ENCODE measurements at regions of chr3 and their contacts with region 1.

Region 1: GRCh38 chr3:177050501-177051237 is 146.6 kb downstream of the TBL1XR1 start:
- DNase-seq: peak; percentile 21
- H3K4me3 Mint-ChIP-seq: no peak overlapping the region
- H3K27ac Mint-ChIP-seq: no peak overlapping the region
- H3K4me1 Mint-ChIP-seq: no peaks in the 10 kb centered on the region
- H3K27me3 Mint-ChIP-seq: no peaks in the 10 kb centered on the region
- CTCF ChIP-seq: peak; percentile 77

Region 2: GRCh38 chr3:177300039-177300833 is 249.6 kb after region 1 on chr3:
- CTCF ChIA-PET with region 1: interaction called, 9 read pairs
- intact Hi-C with region 1: loop called (anchors 5 kb)
- DNase-seq: peak; percentile 72
- H3K4me3 Mint-ChIP-seq: peak overlapping the region; percentile 50
- H3K27ac Mint-ChIP-seq: peak overlapping the region; percentile 86
- H3K4me1 Mint-ChIP-seq: peaks cover 39% of the 10 kb centered on the region
- H3K27me3 Mint-ChIP-seq: no peaks in the 10 kb centered on the region
- CTCF ChIP-seq: no peak

Region 3: DNA sequence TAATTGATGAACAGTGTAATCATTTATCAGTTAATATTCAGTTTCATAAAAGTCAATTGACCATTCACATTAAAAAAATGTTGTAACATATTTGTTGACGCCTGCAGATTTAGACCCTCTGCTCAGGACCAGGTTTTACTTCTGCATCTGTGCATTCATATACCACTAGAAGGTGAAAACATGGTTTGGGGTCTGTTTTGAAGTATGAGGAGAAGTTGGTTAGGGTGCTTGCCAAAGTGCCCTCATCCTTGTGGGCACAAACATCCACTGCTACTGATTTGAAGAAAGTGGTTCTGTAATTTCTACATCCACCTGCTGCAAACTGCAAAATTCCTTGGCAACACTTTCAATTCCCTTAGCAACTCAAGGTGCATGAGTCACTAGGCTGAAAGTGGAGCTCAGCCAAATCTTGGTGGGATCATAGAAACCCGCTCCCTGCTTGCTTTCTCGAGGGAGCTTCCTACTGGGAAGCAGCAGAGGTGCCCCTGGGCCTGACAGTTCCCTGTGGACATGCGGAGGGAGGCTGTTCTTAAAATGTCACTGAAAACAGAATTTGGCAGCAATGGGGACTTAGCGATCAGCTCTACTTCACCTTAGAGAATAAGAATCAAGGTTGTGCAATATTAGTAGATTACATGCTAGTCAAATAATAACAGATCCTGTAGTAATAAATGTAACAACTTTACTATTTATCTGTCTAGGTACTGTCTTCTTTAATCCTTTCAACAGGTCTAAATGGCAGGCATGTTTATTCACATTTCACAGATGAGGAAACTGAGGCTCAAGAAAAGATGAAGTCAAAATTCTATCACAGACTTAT is 447.6 kb after region 1 on chr3:
- CTCF ChIA-PET with region 1: no interaction called
- intact Hi-C with region 1: loop called (anchors 5 kb)
- DNase-seq: peak; percentile 79
- H3K4me3 Mint-ChIP-seq: peak overlapping the region; percentile 20
- H3K27ac Mint-ChIP-seq: peak overlapping the region; percentile 32
- H3K4me1 Mint-ChIP-seq: peaks cover 32% of the 10 kb centered on the region
- H3K27me3 Mint-ChIP-seq: no peaks in the 10 kb centered on the region
- CTCF ChIP-seq: no peak

Region 4: DNA sequence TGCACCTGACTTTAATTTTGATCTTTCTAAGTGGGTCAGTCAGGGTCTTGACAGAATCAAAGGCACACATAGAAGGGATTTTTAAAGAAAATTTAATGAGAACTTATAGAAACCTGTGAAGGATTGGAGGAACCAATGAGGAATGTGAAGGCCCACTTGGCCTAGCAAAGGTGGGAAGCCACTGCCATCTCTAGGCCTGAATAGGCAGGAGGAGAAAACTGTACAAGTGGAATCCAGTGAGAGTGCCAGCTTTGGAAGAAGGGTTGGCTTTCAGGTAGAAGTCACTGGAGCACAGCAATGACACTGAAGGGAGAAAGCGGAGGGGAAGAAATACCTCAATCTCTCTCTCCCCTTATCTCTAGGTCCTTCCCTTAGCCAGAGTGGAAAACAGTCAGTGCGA is 1104.9 kb after region 1 on chr3:
- CTCF ChIA-PET with region 1: no interaction called
- intact Hi-C with region 1: loop called (anchors 10 kb)
- DNase-seq: peak; percentile 16
- H3K4me3 Mint-ChIP-seq: no peak overlapping the region
- H3K27ac Mint-ChIP-seq: no peak overlapping the region
- H3K4me1 Mint-ChIP-seq: no peaks in the 10 kb centered on the region
- H3K27me3 Mint-ChIP-seq: no peaks in the 10 kb centered on the region
- CTCF ChIP-seq: no peak

Region 5: DNA sequence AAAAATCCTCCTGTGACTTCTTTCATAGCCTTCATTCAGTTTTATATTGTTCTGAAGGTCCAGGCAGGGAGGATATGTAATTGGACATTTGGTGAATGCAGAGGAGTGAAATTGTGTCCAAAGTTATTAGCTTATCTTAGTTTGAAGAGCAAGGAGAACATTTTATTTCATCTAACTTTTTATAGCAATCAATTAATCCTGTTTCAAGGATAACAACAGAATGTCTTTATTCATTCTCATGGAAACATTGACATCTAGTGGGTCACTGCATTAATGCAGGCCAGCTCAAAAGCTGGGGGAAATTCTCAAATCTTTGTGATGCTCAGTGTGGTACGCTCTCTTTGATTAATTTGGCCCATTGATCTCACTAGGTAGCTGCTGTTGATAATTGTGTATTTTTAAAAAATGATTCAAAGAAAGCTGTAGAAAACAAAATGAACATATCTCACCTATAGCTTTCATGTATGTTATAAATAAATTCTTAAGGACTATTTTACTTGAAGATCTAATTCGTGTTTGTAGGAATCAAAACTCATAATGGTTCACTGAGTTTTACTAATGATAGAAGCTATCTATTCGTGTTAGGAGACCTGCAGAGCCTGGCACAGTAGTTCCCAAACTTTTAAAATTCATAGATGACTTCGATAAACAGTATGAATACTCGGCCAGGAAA is 1334.7 kb after region 1 on chr3:
- CTCF ChIA-PET with region 1: interaction called, 6 read pairs
- intact Hi-C with region 1: loop called (anchors 2 kb)
- DNase-seq: peak; percentile 61
- H3K4me3 Mint-ChIP-seq: no peak overlapping the region
- H3K27ac Mint-ChIP-seq: no peak overlapping the region
- H3K4me1 Mint-ChIP-seq: no peaks in the 10 kb centered on the region
- H3K27me3 Mint-ChIP-seq: no peaks in the 10 kb centered on the region
- CTCF ChIP-seq: peak; percentile 78

Measured in Calu3 (cell line).